ENCODE measurements at regions of chr14 and their contacts with region 1.

Region 1: GRCh38 chr14:64040044-64040443 is 187.2 kb downstream of the SYNE2 start:
- DNase-seq: no peak
- H3K4me3 ChIP-seq: no peak overlapping the region
- H3K27ac ChIP-seq: no peak overlapping the region
- H3K4me1 ChIP-seq: no peaks in the 10 kb centered on the region
- H3K27me3 ChIP-seq: no peaks in the 10 kb centered on the region
- CTCF ChIP-seq: peak in 1 of 3 experiments; percentile 21; a peak in 1 of 4 replicates
- EP300 ChIP-seq: no peak
- POLR2A ChIP-seq: no peak
- RAD21 ChIP-seq: peak in 1 of 2 experiments; percentile 34; a peak in 3 of 4 replicates

Region 2: DNA sequence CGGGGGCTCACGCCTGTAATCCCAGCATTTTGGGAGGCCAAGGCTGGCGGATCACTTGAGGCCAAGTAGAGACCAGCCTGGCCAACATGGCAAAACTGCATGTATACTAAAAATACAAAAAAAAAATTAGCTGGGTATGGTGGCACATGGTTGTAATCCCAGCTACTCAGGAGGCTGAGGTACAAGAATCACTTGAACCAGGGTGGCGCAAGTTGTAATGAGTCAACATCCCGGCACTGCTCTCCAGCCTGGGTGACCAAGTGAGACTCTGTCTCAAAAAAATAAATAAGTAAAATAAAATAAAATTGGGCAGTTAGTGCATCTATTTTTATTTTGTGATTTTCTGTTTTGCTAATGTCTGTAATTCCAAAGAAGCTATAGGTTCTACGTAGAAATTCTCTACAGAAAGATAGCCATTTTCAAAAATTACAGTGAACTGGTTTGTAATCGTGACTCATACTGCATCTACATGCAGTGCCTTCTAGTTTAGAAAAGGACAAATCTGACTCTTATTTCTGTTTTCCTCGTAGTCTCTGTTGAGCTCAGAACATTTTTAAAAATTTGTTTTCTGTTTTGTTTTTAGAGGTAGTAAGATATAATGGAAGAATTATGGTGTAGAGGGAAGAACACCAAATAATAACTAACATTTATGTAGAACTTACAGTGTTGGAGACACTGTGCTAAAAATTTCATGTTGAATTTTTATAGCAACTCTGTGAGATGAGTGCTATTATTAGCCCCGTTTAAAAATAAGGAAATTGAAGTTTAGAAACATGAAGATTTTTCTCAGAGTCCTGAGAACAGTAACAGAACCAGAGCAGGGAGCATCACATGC is 13.9 kb after region 1 on chr14:
- CTCF ChIA-PET with region 1: interaction called, 10 read pairs
- POLR2A ChIA-PET with region 1: no interaction called
- DNase-seq: no peak
- H3K4me3 ChIP-seq: no peak overlapping the region
- H3K27ac ChIP-seq: no peak overlapping the region
- H3K4me1 ChIP-seq: no peaks in the 10 kb centered on the region; a peak in 1 of 7 replicates
- H3K27me3 ChIP-seq: no peaks in the 10 kb centered on the region
- CTCF ChIP-seq: no peak
- EP300 ChIP-seq: no peak
- POLR2A ChIP-seq: no peak
- RAD21 ChIP-seq: no peak

Measured in H1 (cell line).